CD4-positive, alpha-beta memory T cell (primary cell): ENCODE measurements at regions of chr19 and their contacts with region 1.

Region 1: GRCh38 chr19:38849860-38850435 is at the start of gene HNRNPL:
- DNase-seq: peak; percentile 99 to 100 (median 100)
- H3K4me3 ChIP-seq: peak within 1 kb of the TSS; percentile 94 to 98
- H3K4me3 Mint-ChIP-seq: peak within 1 kb of the TSS; percentile 94 to 97 (median 96)
- H3K27ac ChIP-seq: peak within 1 kb of the TSS; percentile 99
- H3K27ac Mint-ChIP-seq: peak within 1 kb of the TSS; percentile 83 to 100 (median 99)
- H3K4me1 ChIP-seq: peaks cover 58% of the 10 kb centered on the region
- H3K4me1 Mint-ChIP-seq: peaks cover 30 to 72% (median 50%) of the 10 kb centered on the region in 4 donors
- H3K27me3 ChIP-seq: no peaks in the 10 kb centered on the region
- H3K27me3 Mint-ChIP-seq: peaks cover 1% of the 10 kb centered on the region in 2 donors
- total RNA-seq, gene HNRNPL: 329 to 351 TPM

Region 2: GRCh38 chr19:38335949-38336637 is 513.9 kb before region 1 on chr19:
- CTCF ChIA-PET with region 1: no interaction called
- POLR2A ChIA-PET with region 1: no interaction called
- intact Hi-C with region 1: loop called (anchors 5 kb)
- DNase-seq: peak; percentile 93 to 97 (median 94)
- H3K4me3 ChIP-seq: peak overlapping the region; percentile 79 to 88
- H3K4me3 Mint-ChIP-seq: peak overlapping the region; percentile 93 to 99 (median 96)
- H3K27ac ChIP-seq: peak overlapping the region; percentile 83
- H3K27ac Mint-ChIP-seq: peak overlapping the region; percentile 94 to 100 (median 99)
- H3K4me1 ChIP-seq: peaks cover 7% of the 10 kb centered on the region
- H3K4me1 Mint-ChIP-seq: peaks cover 11 to 20% (median 16%) of the 10 kb centered on the region in 4 donors
- H3K27me3 ChIP-seq: no peaks in the 10 kb centered on the region
- H3K27me3 Mint-ChIP-seq: no peaks in the 10 kb centered on the region

Region 3: GRCh38 chr19:38736036-38736412 is 113.9 kb before region 1 on chr19:
- CTCF ChIA-PET with region 1: no interaction called
- POLR2A ChIA-PET with region 1: interaction called, 36 read pairs
- intact Hi-C with region 1: no loop called
- DNase-seq: peak; percentile 57 to 80 (median 59)
- H3K4me3 ChIP-seq: peak overlapping the region in 1 of 2 donors; percentile 14
- H3K4me3 Mint-ChIP-seq: peak overlapping the region; percentile 27 to 77 (median 60)
- H3K27ac ChIP-seq: peak overlapping the region; percentile 30
- H3K27ac Mint-ChIP-seq: peak overlapping the region in 4 of 7 donors; percentile 30 to 88 (median 74)
- H3K4me1 ChIP-seq: peaks cover 57% of the 10 kb centered on the region
- H3K4me1 Mint-ChIP-seq: peaks cover 24 to 69% (median 42%) of the 10 kb centered on the region in 4 donors
- H3K27me3 ChIP-seq: no peaks in the 10 kb centered on the region
- H3K27me3 Mint-ChIP-seq: peaks cover 0 to 2% of the 10 kb centered on the region in 2 donors

Region 4: GRCh38 chr19:38838573-38839269 is 11.2 kb before region 1 on chr19:
- CTCF ChIA-PET with region 1: interaction called, 3 read pairs
- POLR2A ChIA-PET with region 1: interaction called, 130 read pairs
- intact Hi-C with region 1: loop called (anchors 1 kb)
- DNase-seq: peak in 1 of 5 donors; percentile 56
- H3K4me3 ChIP-seq: no peak overlapping the region
- H3K4me3 Mint-ChIP-seq: peak overlapping the region in 1 of 8 donors; percentile 49
- H3K27ac ChIP-seq: no peak overlapping the region
- H3K27ac Mint-ChIP-seq: peak overlapping the region in 6 of 7 donors; percentile 64 to 86 (median 78)
- H3K4me1 ChIP-seq: peaks cover 46% of the 10 kb centered on the region
- H3K4me1 Mint-ChIP-seq: peaks cover 23 to 48% (median 39%) of the 10 kb centered on the region in 4 donors
- H3K27me3 ChIP-seq: no peaks in the 10 kb centered on the region
- H3K27me3 Mint-ChIP-seq: peaks cover 0 to 1% of the 10 kb centered on the region in 2 donors

Region 5: DNA sequence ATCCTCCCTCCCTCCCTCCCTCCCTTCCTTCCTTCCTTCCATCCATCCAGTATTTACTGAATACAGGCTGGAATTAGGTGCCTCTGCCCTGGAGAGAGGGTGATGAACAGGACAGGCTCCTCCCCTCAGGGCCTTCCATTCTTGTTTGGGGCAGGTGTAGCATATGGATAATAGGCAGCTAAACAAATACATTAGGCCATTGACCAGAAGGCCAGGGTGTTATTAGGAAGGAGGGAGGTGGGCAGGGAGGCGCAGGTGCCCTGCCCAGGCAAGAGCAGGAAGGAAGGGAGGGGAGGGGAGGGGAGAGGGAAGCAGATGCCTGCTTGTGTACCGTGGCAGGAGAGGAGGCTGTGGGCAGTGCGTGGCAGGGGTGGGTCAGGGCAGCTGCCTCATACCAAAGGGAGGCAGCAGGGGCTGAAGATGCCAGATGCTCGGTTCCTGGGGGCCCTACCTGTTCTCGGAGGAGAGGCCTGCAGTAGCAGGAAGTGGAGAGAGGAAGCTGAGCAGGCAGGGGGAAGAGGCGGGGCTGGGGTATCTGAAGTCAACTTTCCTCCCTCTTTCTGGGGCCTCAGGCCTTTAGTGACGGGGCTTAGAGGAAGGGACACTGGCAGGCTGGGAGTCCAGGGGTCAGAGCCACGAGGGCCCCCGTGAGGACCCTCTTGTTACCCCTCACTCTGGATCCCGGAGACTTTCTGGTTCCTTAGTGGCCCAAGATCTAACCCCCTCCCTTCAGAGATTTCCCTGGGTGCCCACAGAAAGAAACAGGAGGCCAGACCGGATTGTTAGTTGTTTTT is 28.0 kb after region 1 on chr19 and contains the start of gene RINL:
- CTCF ChIA-PET with region 1: interaction called, 4 read pairs
- POLR2A ChIA-PET with region 1: interaction called, 297 read pairs
- intact Hi-C with region 1: no loop called
- DNase-seq: peak; percentile 68 to 82 (median 72)
- H3K4me3 ChIP-seq: peak within 1 kb of the TSS; percentile 41 to 73
- H3K4me3 Mint-ChIP-seq: peak within 1 kb of the TSS; percentile 79 to 94 (median 88)
- H3K27ac ChIP-seq: peak within 1 kb of the TSS; percentile 89
- H3K27ac Mint-ChIP-seq: peak within 1 kb of the TSS; percentile 96 to 99 (median 97)
- H3K4me1 ChIP-seq: peaks cover 49% of the 10 kb centered on the region
- H3K4me1 Mint-ChIP-seq: peaks cover 21 to 40% (median 30%) of the 10 kb centered on the region in 4 donors
- H3K27me3 ChIP-seq: no peaks in the 10 kb centered on the region
- H3K27me3 Mint-ChIP-seq: no peaks in the 10 kb centered on the region
- total RNA-seq, gene RINL: 64.4 to 65.9 TPM

Region 6: DNA sequence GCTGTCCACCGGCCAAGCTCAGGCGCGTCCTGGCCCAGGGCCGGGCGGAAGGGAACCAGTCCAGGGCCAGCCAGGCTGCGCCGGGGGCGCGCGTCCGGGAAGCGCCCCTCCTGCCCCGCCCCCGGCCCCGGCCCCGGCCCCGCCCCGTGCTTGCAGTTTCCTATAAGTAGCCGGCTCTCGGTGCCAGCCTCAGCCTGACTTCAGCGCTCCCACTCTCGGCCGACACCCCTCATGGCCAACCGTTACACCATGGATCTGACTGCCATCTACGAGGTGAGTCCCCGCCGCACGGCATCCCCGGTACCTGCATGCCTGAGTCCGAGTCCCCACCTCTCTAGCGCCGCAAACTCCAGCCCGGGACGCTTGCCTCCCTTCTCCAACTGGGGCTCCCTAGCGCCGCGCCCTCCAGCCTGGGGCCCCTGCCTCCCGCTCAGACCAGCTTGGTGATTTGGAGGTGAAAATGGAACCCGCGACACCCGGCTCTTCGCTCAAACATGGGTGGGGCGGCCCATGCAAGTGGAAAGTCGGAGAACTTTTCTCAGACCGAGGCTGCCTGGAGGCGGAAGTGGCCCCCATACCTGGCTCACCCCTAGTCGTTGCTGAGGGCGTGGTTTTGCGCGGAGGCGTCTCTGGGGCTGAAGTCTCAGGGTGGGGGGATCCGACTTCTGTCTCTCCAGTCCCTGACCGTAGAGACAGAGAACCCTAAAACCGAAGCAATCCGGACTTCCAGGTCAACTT is 556.9 kb after region 1 on chr19 and contains the start of gene ZFP36:
- CTCF ChIA-PET with region 1: no interaction called
- POLR2A ChIA-PET with region 1: no interaction called
- intact Hi-C with region 1: loop called (anchors 2 kb)
- DNase-seq: peak; percentile 86 to 88 (median 87)
- H3K4me3 ChIP-seq: peak within 1 kb of the TSS; percentile 97 to 100
- H3K4me3 Mint-ChIP-seq: peak within 1 kb of the TSS; percentile 88 to 99 (median 97)
- H3K27ac ChIP-seq: peak within 1 kb of the TSS; percentile 100
- H3K27ac Mint-ChIP-seq: peak within 1 kb of the TSS; percentile 99 to 100 (median 100)
- H3K4me1 ChIP-seq: peaks cover 66% of the 10 kb centered on the region
- H3K4me1 Mint-ChIP-seq: peaks cover 38 to 95% (median 55%) of the 10 kb centered on the region in 4 donors
- H3K27me3 ChIP-seq: no peaks in the 10 kb centered on the region
- H3K27me3 Mint-ChIP-seq: peaks cover 0 to 2% of the 10 kb centered on the region in 2 donors
- total RNA-seq, gene ZFP36: 151 to 152 TPM